ENCODE measurements at regions of chr3 and their contacts with region 1.

Region 1: GRCh38 chr3:196486263-196486662 is 17.3 kb downstream of the RNF168 start:
- DNase-seq: peak; percentile 37
- H3K4me3 Mint-ChIP-seq: no peak overlapping the region
- H3K27ac Mint-ChIP-seq: no peak overlapping the region
- H3K4me1 Mint-ChIP-seq: peaks cover 12% of the 10 kb centered on the region
- H3K27me3 Mint-ChIP-seq: no peaks in the 10 kb centered on the region

Region 2: GRCh38 chr3:196454935-196455334 is 31.3 kb before region 1 on chr3:
- CTCF ChIA-PET with region 1: no interaction called
- POLR2A ChIA-PET with region 1: no interaction called
- intact Hi-C with region 1: no loop called
- DNase-seq: no peak
- H3K4me3 Mint-ChIP-seq: no peak overlapping the region
- H3K27ac Mint-ChIP-seq: no peak overlapping the region
- H3K4me1 Mint-ChIP-seq: peaks cover 10% of the 10 kb centered on the region
- H3K27me3 Mint-ChIP-seq: no peaks in the 10 kb centered on the region

Region 3: DNA sequence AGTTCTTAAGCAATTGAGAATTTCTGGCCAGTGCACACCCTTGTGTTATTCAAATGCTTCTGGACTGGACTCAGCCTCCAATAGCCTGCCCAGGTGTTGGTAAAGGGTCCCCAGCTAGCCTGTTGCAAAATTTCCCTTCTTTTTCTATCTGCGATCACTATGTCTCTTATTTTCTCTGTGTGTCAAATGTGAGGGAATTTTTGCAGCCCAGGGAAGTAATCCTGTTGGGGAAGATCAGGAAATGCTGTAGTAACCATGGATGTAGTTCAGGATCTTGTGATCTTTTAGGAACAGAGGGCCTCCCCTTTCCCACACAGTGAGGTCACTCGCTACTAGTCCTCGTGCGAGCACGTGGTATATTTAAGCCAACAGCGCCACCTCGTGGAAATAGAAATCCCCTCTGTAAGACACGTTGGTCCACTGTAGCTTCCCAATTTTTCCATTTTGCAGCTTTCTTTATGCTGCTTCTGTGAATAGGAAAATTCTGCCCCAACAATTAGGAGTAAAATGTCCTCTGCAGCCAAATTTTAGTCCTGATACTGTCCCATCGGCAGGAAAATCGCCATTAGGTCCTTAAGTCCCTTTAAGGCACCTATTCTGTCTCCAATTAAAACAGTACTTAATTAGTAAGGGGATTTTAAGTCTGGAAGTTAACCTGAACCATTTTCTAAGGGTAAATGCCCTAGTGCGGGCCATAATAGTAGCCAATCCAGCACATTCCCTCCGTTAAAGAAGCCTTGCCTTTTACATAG is 32.9 kb after region 1 on chr3:
- CTCF ChIA-PET with region 1: interaction called, 34 read pairs
- POLR2A ChIA-PET with region 1: interaction called, 3 read pairs
- intact Hi-C with region 1: loop called (anchors 5 kb)
- DNase-seq: peak; percentile 78
- H3K4me3 Mint-ChIP-seq: no peak overlapping the region
- H3K27ac Mint-ChIP-seq: no peak overlapping the region
- H3K4me1 Mint-ChIP-seq: no peaks in the 10 kb centered on the region
- H3K27me3 Mint-ChIP-seq: no peaks in the 10 kb centered on the region

Region 4: DNA sequence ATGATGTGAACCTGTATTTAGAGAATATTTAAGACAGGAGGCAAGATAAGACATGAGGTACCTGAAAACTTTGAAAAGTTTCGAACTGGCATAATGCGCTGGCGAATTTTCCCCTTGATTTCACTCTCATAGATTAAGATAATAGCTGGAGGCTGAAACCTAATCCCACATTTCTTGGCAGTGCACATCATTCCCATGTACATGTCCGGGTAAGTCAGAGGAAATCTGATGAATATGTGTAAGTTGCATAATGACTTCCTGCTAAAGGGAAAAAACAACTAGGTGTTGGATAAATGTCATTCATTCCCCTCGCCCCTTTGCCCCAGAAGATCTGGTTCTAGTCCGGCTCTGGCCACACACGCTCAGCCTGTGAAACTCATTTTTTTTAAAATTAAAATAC is 222.2 kb after region 1 on chr3:
- CTCF ChIA-PET with region 1: no interaction called
- POLR2A ChIA-PET with region 1: no interaction called
- intact Hi-C with region 1: no loop called
- DNase-seq: no peak
- H3K4me3 Mint-ChIP-seq: no peak overlapping the region
- H3K27ac Mint-ChIP-seq: no peak overlapping the region
- H3K4me1 Mint-ChIP-seq: peaks cover 20% of the 10 kb centered on the region
- H3K27me3 Mint-ChIP-seq: no peaks in the 10 kb centered on the region

Region 5: DNA sequence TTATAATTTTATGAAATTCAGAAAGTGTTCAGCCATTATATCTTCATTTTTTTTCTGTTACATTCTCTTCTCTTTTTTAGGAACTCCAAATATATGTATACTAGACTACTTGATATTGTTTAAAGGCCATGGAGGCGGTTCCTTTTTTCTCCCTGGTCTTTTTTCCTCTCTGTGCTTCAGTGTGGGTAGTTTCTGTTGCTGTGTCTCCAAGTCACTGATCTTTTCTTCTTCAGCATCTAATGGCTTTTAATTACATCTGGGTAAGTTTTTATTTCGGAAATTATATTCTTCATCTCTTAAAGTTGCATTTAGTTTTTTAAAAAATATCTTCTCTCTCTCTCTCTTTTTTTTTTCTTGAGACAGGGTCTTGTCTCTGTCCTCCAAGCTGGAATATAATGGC is 234.8 kb after region 1 on chr3:
- CTCF ChIA-PET with region 1: no interaction called
- POLR2A ChIA-PET with region 1: no interaction called
- intact Hi-C with region 1: no loop called
- DNase-seq: no peak
- H3K4me3 Mint-ChIP-seq: no peak overlapping the region
- H3K27ac Mint-ChIP-seq: no peak overlapping the region
- H3K4me1 Mint-ChIP-seq: peaks cover 1% of the 10 kb centered on the region
- H3K27me3 Mint-ChIP-seq: no peaks in the 10 kb centered on the region

Region 6: DNA sequence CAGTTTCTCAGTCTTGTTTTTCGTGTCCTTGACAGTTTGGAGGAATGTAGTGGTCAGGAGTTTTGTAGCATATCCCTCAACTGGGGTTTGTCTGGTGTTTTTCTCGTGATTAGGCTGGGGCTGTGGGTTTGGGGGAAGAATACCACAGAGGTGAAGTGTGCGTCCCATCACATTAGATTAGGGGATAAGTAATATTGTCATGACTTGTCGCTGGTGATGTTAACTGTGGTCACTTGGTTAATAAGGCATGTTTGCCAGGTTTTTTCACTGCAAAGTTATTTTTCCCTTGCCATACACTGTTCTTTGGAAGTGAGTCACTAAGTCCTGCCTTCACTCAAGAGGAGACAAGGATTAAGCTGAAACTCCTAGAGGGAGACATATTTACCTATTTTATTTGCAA is 292.5 kb after region 1 on chr3:
- CTCF ChIA-PET with region 1: no interaction called
- POLR2A ChIA-PET with region 1: no interaction called
- intact Hi-C with region 1: no loop called
- DNase-seq: no peak
- H3K4me3 Mint-ChIP-seq: no peak overlapping the region
- H3K27ac Mint-ChIP-seq: no peak overlapping the region
- H3K4me1 Mint-ChIP-seq: peaks cover 53% of the 10 kb centered on the region
- H3K27me3 Mint-ChIP-seq: no peaks in the 10 kb centered on the region